ENCODE measurements at regions of chr19 and their contacts with region 1.

Region 1: GRCh38 chr19:58380722-58381466 is at the start of gene ZNF837:
- DNase-seq: peak; percentile 100
- H3K4me3 ChIP-seq: peak within 1 kb of the TSS; percentile 59 to 84 (median 72)
- H3K27ac ChIP-seq: peak within 1 kb of the TSS; percentile 63
- H3K4me1 ChIP-seq: peaks cover 8% of the 10 kb centered on the region
- H3K27me3 ChIP-seq: no peaks in the 10 kb centered on the region
- CTCF ChIP-seq: no peak
- POLR2A ChIP-seq: peak; percentile 72
- total RNA-seq, gene ZNF837: 1.4 and 1.7 TPM in 2 replicates

Region 2: GRCh38 chr19:58228585-58229254 is 152.2 kb before region 1 on chr19 and contains the start of gene ZNF544:
- CTCF ChIA-PET with region 1: no interaction called
- POLR2A ChIA-PET with region 1: no interaction called
- dilution Hi-C with region 1: no loop called
- intact Hi-C with region 1: loop called (anchors 2 kb)
- DNase-seq: peak; percentile 84
- H3K4me3 ChIP-seq: peak within 1 kb of the TSS; percentile 53 to 66 (median 61)
- H3K27ac ChIP-seq: peak within 1 kb of the TSS; percentile 42
- H3K4me1 ChIP-seq: peaks cover 10% of the 10 kb centered on the region
- H3K27me3 ChIP-seq: no peaks in the 10 kb centered on the region
- CTCF ChIP-seq: peak; percentile 6 to 40
- POLR2A ChIP-seq: peak; percentile 92
- total RNA-seq, gene ZNF544: 39.3 and 45.4 TPM in 2 replicates

Region 3: GRCh38 chr19:58305065-58305931 is 75.6 kb before region 1 on chr19 and contains the start of gene ERVK3-1:
- CTCF ChIA-PET with region 1: no interaction called
- POLR2A ChIA-PET with region 1: no interaction called
- dilution Hi-C with region 1: no loop called
- intact Hi-C with region 1: loop called (anchors 2 kb)
- DNase-seq: peak; percentile 98
- H3K4me3 ChIP-seq: peak within 1 kb of the TSS; percentile 44 to 72 (median 49)
- H3K27ac ChIP-seq: peak within 1 kb of the TSS; percentile 95
- H3K4me1 ChIP-seq: peaks cover 9% of the 10 kb centered on the region
- H3K27me3 ChIP-seq: no peaks in the 10 kb centered on the region
- CTCF ChIP-seq: no peak
- POLR2A ChIP-seq: peak; percentile 92
- total RNA-seq, gene ERVK3-1: 25.8 and 28.4 TPM in 2 replicates

Region 4: GRCh38 chr19:58362272-58362994 is 18.5 kb before region 1 on chr19 and contains the start of gene ZNF497:
- CTCF ChIA-PET with region 1: interaction called, 3 read pairs
- POLR2A ChIA-PET with region 1: interaction called, 3 read pairs
- dilution Hi-C with region 1: no loop called
- intact Hi-C with region 1: loop called (anchors 1 kb)
- DNase-seq: peak; percentile 98
- H3K4me3 ChIP-seq: peak within 1 kb of the TSS; percentile 35 to 66 (median 51)
- H3K27ac ChIP-seq: peak within 1 kb of the TSS; percentile 57
- H3K4me1 ChIP-seq: peaks cover 3% of the 10 kb centered on the region
- H3K27me3 ChIP-seq: peaks cover 12 to 14% of the 10 kb centered on the region in 2 experiments
- CTCF ChIP-seq: peak in 1 of 2 donors; percentile 9
- POLR2A ChIP-seq: peak; percentile 93
- total RNA-seq, gene ZNF497: 0.42 and 1.3 TPM in 2 replicates

Region 5: DNA sequence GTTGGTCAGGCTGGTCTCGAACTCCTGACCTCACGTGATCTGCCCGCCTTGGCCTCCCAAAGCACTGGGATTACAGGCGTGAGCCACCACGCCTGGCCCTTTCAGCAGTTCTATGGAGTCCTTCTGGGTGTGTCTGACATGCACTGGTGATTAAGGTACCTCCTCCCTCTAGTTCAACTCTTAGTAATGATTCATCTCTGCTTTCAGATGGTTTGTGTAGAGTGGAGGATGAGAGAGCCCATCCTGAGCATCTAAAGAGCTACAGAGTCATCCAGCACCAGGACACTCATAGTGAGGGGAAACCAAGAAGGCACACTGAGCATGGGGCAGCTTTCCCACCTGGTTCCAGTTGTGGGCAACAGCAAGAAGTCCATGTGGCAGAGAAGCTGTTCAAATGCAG is 35.7 kb after region 1 on chr19:
- CTCF ChIA-PET with region 1: no interaction called
- POLR2A ChIA-PET with region 1: no interaction called
- dilution Hi-C with region 1: no loop called
- intact Hi-C with region 1: no loop called
- DNase-seq: no peak
- H3K4me3 ChIP-seq: no peak overlapping the region
- H3K27ac ChIP-seq: no peak overlapping the region
- H3K4me1 ChIP-seq: no peaks in the 10 kb centered on the region
- H3K27me3 ChIP-seq: no peaks in the 10 kb centered on the region
- CTCF ChIP-seq: no peak
- POLR2A ChIP-seq: no peak

Region 6: GRCh38 chr19:58466760-58467589 is 86.1 kb after region 1 on chr19 and contains the start of gene ZNF324:
- CTCF ChIA-PET with region 1: no interaction called
- POLR2A ChIA-PET with region 1: no interaction called
- dilution Hi-C with region 1: no loop called
- intact Hi-C with region 1: loop called (anchors 1 kb)
- DNase-seq: peak; percentile 96
- H3K4me3 ChIP-seq: peak within 1 kb of the TSS; percentile 62 to 76 (median 72)
- H3K27ac ChIP-seq: peak within 1 kb of the TSS; percentile 45
- H3K4me1 ChIP-seq: peaks cover 3% of the 10 kb centered on the region
- H3K27me3 ChIP-seq: no peaks in the 10 kb centered on the region
- CTCF ChIP-seq: no peak
- POLR2A ChIP-seq: peak; percentile 76
- total RNA-seq, gene ZNF324: 7.1 and 8.7 TPM in 2 replicates